Left lung (tissue), 14 donors: ENCODE measurements at regions of chr1 and their contacts with region 1.

Region 1: GRCh38 chr1:3069491-3070303 is 694 bp downstream of the PRDM16 start:
- DNase-seq: peak; percentile 50 to 90 (median 76)
- ATAC-seq: peak; percentile 14
- H3K4me3 ChIP-seq: peak overlapping the region; percentile 65 to 67
- H3K27ac ChIP-seq: peak overlapping the region; percentile 77 to 91
- H3K4me1 ChIP-seq: peaks cover 0 to 33% of the 10 kb centered on the region in 2 donors
- H3K27me3 ChIP-seq: peaks cover 61 to 97% of the 10 kb centered on the region in 2 donors
- CTCF ChIP-seq: peak in 1 of 2 donors; percentile 25

Region 2: DNA sequence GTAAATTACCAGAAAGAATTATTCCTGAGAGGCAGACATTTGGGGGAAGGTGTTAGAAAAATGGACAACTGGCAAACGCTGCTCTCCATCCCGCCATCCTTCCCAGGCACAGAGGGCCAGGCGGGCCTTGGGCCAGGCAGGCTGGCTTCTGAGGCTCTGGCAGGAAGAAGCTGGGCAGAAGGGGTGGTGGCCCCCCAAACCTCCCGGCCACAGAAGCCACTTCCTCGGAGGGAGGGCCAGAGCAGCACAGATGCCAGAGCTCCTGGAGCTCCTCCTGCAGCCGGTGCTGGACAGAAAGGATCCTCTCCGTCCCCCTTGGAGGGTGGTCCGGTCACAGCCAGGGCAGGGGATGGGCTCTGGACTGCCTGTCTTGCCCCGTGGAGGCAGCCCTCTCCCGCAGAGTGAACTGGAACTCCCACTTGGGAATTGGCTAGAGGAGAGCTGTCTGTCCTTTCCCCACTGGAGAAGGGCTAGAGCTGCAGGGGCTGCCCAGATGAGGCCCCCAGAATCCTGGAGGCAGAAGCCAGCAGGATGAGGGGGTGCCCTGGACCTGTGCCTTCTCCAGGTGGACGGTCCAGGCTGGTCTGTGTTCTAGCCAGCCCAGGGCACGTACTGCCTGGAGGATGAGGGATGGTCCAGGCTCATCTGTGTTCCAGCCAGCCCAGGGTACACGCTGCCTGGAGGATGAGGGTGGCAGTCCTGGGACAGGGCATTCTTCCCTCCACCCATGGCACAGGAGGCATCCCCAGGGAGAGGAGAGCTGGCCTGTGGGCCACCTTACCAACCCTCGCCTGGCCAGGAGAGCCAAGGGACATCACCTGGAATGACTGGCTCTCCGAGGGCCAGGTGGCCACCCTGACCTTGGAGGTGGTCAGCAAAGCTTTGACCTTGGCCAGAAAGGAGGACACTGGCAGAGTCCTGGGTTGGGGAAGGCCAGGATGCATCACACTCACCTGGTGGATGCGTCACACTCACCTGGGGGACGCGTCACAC is 95.8 kb before region 1 on chr1:
- intact Hi-C with region 1: no loop called
- DNase-seq: no peak
- ATAC-seq: no peak
- H3K4me3 ChIP-seq: no peak overlapping the region
- H3K27ac ChIP-seq: no peak overlapping the region
- H3K4me1 ChIP-seq: no peaks in the 10 kb centered on the region
- H3K27me3 ChIP-seq: peaks cover 0 to 54% of the 10 kb centered on the region in 2 donors
- CTCF ChIP-seq: no peak

Region 3: DNA sequence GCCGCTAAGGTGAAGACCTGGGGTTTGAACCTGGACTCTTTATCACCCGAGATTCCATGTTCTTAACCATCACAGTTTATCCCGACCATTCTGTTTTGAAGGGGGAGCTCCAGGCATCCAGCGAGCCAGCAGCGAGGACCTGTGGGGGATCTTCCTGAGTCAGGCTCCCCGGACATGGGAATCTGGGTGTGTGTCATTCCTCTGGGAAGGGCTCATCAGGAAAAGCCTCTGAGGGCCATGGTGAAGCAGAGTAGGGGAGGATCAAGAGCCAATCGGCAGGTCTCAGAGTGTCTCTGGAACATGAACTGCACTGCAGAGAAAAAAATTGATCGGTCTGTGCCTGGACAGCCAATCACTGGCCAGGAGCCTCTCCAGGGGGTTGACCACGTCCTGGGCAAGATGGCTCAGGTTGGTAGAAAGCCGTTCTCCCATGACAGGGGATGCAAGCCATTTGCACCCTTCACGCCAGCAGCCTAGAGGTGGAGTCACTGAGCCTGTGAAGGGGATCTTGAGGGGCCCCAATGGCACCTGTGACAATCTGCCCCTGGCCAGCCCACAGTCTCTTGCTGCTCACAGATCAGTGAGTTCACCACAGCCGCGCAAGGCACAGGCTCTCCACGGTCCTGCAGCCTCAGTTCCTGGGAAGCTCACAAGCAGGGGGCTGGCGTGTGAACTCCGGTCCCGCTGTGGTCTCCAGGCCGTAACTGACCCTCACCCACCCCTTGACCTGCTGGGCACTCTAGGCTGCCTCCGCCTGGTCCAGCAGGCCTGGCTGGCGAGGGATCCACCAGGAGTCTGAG is 68.8 kb before region 1 on chr1:
- intact Hi-C with region 1: no loop called
- DNase-seq: peak in 2 of 4 donors; percentile 10 to 68
- ATAC-seq: no peak
- H3K4me3 ChIP-seq: no peak overlapping the region
- H3K27ac ChIP-seq: no peak overlapping the region
- H3K4me1 ChIP-seq: no peaks in the 10 kb centered on the region
- H3K27me3 ChIP-seq: peaks cover 0 to 65% of the 10 kb centered on the region in 2 donors
- CTCF ChIP-seq: no peak

Region 4: DNA sequence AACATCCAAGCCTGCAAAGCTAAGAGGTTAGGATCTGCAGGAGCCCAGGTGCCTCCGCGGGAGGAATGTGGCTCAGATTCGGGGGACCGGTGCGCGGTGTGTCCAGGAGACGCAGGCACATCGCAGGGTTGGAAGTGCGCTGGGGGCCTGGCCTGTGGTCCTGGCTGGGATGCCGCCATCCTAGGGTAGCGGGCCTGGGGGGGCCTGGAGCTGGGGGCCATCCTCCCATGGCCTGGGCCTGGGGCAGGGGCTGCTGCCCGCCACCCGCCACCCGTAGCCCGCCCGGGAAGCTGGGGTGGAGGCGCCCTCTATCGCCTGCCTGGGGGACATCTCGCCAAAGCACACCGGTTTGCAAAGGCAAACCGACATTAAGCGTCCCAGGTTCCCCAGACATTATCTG is 214.2 kb after region 1 on chr1:
- intact Hi-C with region 1: loop called in 1 of 2 experiments (anchors 10 kb)
- DNase-seq: peak in 2 of 4 donors; percentile 23 to 52
- ATAC-seq: peak; percentile 88
- H3K4me3 ChIP-seq: no peak overlapping the region
- H3K27ac ChIP-seq: no peak overlapping the region
- H3K4me1 ChIP-seq: no peaks in the 10 kb centered on the region
- H3K27me3 ChIP-seq: peaks cover 0 to 43% of the 10 kb centered on the region in 2 donors
- CTCF ChIP-seq: peak; percentile 53 to 57